Activated T-helper 2 cell treated with anti-CD3 and anti-CD28 coated beads, Interferon-gamma antibody, Interleukin-2, Interleukin-4, amounts not matched to agents 10 μg/mL and 5 μg/mL and 100 μg/mL, durations not matched to agents 14 hours and 24 hours and 36 hours (primary cell): ENCODE measurements at regions of chr17 and their contacts with region 1.

Region 1: DNA sequence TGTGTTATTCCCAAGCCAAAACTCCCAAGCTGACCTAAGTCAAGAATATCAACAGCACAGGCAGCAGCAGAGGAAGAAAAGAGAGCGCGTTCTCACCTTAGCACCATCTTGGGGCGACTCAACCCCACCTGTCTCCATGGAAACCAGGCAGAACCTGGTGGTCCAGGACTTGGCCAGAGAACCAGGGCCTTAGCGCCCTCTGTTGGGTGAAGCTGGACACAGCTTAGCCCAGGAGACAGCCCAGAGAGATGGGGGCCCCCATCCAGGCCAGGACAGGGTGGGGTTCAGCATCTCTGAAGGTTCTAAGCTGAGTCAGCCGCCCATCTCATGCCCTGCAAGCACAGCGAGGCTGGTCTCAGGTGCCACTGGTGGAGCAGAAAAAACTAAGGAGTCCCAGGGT is 60.1 kb upstream of the TMEM132E start:
- DNase-seq: no peak
- H3K4me3 Mint-ChIP-seq: no peak overlapping the region
- H3K27ac Mint-ChIP-seq: no peak overlapping the region
- H3K4me1 Mint-ChIP-seq: no peaks in the 10 kb centered on the region
- H3K27me3 Mint-ChIP-seq: peaks cover 12% of the 10 kb centered on the region

Region 2: GRCh38 chr17:34420254-34420766 is 99.0 kb before region 1 on chr17:
- intact Hi-C with region 1: loop called (anchors 5 kb)
- DNase-seq: peak; percentile 38
- H3K4me3 Mint-ChIP-seq: no peak overlapping the region
- H3K27ac Mint-ChIP-seq: no peak overlapping the region
- H3K4me1 Mint-ChIP-seq: peaks cover 4% of the 10 kb centered on the region
- H3K27me3 Mint-ChIP-seq: peaks cover 45% of the 10 kb centered on the region

Region 3: DNA sequence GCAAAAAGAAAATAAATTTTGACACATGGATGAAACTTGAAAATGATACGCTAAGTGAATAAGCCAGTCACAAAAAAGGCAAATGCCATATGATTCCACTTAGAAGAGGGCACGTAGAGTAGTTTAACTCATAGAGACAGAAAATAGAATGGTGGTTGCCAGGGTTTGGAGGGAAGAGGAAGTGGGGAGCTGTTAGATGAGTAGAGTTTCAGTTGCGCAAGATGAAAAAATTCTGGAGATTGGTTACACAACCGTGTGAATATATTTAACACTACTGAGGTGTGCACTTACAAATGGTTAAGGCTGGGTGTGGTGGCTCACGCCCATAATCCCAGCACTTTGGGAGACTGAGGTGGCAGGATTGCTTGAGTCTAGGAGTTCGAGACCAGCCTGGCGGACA is 33.3 kb before region 1 on chr17:
- intact Hi-C with region 1: no loop called
- DNase-seq: no peak
- H3K4me3 Mint-ChIP-seq: no peak overlapping the region
- H3K27ac Mint-ChIP-seq: no peak overlapping the region
- H3K4me1 Mint-ChIP-seq: peaks cover 5% of the 10 kb centered on the region
- H3K27me3 Mint-ChIP-seq: peaks cover 27% of the 10 kb centered on the region

Region 4: DNA sequence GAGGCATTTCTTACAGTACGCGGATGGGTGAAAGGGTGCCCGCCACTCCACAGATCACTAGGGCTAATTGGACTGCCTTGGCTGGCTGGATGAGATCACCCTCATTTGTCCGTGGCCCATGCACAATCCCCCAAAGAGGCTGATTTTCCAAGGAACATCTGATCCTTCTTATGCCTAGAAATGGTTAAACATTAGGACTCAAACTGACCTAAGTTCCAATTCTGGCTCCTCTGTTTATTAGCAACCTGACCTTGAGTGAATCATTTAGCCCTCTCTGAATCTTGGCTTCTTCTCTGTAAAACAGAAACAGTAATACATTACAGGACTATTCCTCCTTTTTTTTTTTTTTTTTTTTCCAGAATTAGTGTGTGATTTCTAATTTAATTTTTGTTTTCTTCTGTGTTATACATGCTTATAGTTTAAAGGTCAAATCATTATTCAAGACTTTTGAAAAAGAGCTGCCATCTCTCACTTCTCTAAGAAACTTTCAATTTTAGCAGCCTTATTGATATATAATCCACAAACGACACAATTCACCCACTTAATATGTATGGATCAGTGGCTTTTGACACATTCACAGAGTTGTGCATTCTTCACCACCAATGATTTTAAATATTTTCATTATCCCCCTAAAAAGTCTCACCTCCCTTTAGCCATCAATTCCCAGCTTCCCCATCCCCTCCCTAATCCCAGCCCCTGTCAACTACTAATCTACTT is 14.7 kb after region 1 on chr17:
- intact Hi-C with region 1: no loop called
- DNase-seq: no peak
- H3K4me3 Mint-ChIP-seq: no peak overlapping the region
- H3K27ac Mint-ChIP-seq: no peak overlapping the region
- H3K4me1 Mint-ChIP-seq: no peaks in the 10 kb centered on the region
- H3K27me3 Mint-ChIP-seq: peaks cover 25% of the 10 kb centered on the region